ENCODE measurements at regions of chr17 and their contacts with region 1.

Region 1: DNA sequence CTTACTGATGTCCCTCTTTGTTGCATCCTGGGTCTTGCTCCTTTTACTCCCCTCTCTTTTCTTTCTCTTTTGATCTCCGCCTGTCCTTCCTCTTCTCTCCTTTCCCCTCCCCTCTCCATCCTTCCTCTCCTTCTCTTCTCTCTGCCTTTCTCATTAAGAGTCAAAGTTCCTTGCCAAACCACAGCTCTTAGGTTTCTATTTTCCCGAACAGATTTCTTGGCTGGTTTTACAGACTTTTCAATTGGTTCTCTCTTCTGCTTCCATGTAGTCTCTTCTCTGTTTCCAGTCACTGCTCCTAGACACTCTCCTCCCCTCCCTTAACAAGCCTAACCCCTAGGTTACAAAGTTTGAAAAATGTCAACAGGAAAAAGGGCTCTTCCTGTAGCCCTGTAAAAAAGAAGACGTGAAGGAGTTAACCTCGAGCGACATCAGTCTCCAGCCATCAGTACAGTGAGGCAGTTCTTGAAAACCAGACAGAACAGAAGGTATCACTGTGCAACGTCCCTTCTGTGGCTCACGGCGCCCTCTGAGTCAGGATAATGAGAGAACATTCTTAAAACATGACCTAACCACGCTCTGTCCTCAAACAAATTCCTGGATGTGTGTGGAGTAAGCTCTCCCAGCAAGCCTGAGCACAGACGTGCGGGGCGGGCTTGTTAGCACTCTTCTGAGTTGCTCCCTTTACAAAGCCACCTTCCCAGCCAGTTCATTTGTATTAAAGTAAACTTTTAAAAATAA is 11.5 kb upstream of the MARCHF10 start:
- DNase-seq: peak; percentile 80 to 95
- H3K4me3 ChIP-seq: no peak overlapping the region
- H3K27ac ChIP-seq: peak overlapping the region; percentile 74
- H3K4me1 ChIP-seq: peaks cover 57% of the 10 kb centered on the region
- H3K27me3 ChIP-seq: no peaks in the 10 kb centered on the region
- CTCF ChIP-seq: no peak

Region 2: GRCh38 chr17:62778689-62779681 is 40.7 kb before region 1 on chr17:
- CTCF ChIA-PET with region 1: no interaction called
- POLR2A ChIA-PET with region 1: interaction called, 4 read pairs
- intact Hi-C with region 1: loop called (anchors 2 kb)
- DNase-seq: peak; percentile 89 to 98
- H3K4me3 ChIP-seq: peak overlapping the region; percentile 22; the same call in 1 of the 2 replicates
- H3K27ac ChIP-seq: peak overlapping the region; percentile 98
- H3K4me1 ChIP-seq: peaks cover 55% of the 10 kb centered on the region
- H3K27me3 ChIP-seq: no peaks in the 10 kb centered on the region
- CTCF ChIP-seq: no peak

Region 3: DNA sequence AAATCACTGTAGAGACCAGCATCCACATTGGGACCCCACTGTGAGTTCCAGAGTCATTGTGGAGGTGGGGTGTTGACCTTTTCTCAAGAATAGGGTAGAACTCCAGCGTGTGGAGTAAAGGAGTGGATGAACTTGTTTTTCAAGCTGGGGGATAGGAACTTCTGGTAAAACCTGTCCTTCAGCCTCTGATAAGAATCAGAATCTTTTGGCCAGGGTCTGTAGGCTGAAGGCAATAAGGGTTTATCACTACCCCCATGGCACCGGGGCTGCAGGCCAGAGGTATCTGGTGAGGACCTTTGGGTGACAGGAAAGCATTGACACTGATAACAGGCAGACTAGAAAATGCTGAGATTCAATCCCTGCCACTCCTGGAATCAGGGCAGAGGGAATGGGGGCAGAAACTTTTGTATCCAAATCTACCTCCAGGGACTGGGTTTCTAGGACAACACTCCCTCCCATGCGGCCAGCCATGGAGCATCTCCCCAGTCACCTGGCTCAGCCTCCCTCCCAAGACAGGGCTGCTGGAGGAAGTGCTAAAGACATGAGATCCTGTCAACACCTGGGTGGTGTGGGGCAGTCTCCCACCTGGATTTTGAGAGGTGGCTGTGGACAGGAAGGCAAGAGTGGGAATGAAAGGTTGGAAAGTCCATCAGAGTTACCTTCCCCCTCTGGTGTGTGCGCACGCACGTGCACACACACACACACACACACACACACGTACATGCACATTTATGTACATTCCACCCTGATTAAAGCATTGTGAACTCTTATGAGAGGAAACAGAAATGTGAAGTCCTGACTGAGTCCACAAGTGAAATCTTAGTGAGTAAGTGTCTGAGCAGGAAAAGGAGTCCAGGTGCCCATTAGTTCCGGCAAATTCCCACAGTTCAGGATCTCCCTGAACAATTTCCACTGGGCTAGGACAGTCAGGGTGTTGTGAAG is 41.5 kb after region 1 on chr17:
- CTCF ChIA-PET with region 1: no interaction called
- POLR2A ChIA-PET with region 1: no interaction called
- intact Hi-C with region 1: loop called (anchors 1 kb)
- DNase-seq: peak; percentile 79 to 94
- H3K4me3 ChIP-seq: peak overlapping the region; percentile 32; the same call in 1 of the 2 replicates
- H3K27ac ChIP-seq: peak overlapping the region; percentile 80
- H3K4me1 ChIP-seq: peaks cover 54% of the 10 kb centered on the region
- H3K27me3 ChIP-seq: no peaks in the 10 kb centered on the region
- CTCF ChIP-seq: no peak

Region 4: GRCh38 chr17:62968445-62968923 is 148.8 kb after region 1 on chr17:
- CTCF ChIA-PET with region 1: no interaction called
- POLR2A ChIA-PET with region 1: no interaction called
- intact Hi-C with region 1: loop called (anchors 1 kb)
- DNase-seq: peak; percentile 50 to 84
- H3K4me3 ChIP-seq: peak overlapping the region; percentile 88
- H3K27ac ChIP-seq: peak overlapping the region; percentile 60
- H3K4me1 ChIP-seq: peaks cover 39% of the 10 kb centered on the region
- H3K27me3 ChIP-seq: no peaks in the 10 kb centered on the region
- CTCF ChIP-seq: peak; percentile 86

Region 5: DNA sequence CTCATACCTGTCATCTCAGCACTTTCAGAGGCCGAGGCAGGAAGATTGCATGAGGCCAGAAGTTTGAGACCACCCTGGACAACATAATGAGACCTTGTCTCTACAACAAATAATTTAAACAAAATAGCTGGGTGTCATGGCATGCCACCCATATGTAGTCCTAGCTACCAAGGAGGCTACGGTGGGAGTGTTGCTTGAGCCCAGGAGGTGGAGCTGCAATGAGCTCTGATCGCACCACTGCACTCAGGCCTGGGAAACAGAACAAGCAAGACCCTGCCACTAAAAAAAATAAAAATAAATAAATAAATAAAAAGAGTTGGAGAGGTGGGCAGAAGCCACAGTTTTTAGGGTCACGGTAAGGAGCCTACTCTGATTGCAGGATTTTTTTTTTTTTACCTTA is 282.4 kb after region 1 on chr17:
- CTCF ChIA-PET with region 1: no interaction called
- POLR2A ChIA-PET with region 1: no interaction called
- intact Hi-C with region 1: no loop called
- DNase-seq: no peak
- H3K4me3 ChIP-seq: no peak overlapping the region
- H3K27ac ChIP-seq: no peak overlapping the region
- H3K4me1 ChIP-seq: no peaks in the 10 kb centered on the region
- H3K27me3 ChIP-seq: no peaks in the 10 kb centered on the region
- CTCF ChIP-seq: no peak

Region 6: GRCh38 chr17:63249256-63250004 is 429.8 kb after region 1 on chr17:
- CTCF ChIA-PET with region 1: no interaction called
- POLR2A ChIA-PET with region 1: interaction called, 11 read pairs
- intact Hi-C with region 1: no loop called
- DNase-seq: no peak
- H3K4me3 ChIP-seq: no peak overlapping the region
- H3K27ac ChIP-seq: no peak overlapping the region
- H3K4me1 ChIP-seq: no peaks in the 10 kb centered on the region
- H3K27me3 ChIP-seq: no peaks in the 10 kb centered on the region
- CTCF ChIP-seq: no peak